ENCODE measurements at regions of chr13 and their contacts with region 1.

Region 1: GRCh38 chr13:31518645-31519044 is 220.7 kb upstream of the RXFP2 start:
- DNase-seq: no peak
- ATAC-seq: no peak

Region 2: DNA sequence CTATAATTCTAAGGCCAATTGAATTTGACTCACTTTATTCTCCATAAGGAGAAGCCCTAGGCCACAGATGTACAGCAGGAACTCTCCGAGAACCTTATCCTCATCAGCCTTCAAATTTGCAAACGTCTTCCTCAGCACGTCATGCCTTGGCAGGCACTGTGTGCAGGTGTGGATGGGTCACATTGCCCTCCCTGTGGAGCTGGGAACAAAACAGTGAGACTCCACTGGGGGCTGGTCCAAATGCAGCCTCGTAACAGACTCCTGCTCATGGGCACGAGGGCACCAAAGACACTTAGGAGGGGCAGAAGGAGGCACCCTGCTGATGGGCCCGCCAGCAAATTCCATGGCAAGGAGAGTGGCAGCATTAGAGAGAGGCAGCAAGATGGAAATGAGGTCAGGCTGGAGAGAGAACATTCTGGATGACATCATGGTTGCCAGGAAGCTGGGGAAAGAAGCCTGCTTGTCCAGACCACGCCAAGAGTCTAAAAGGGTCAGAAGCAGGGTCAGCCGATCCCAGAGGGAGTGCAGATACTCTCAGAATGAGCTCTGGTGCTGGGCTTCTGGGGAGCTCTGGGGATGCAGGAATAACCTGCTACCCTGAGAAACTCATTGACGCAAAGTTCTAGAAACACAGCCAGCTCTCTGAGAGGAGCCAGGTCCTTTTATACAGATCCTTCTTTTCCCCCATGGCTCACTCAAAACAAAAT is 76.7 kb before region 1 on chr13:
- intact Hi-C with region 1: loop called (anchors 5 kb)
- DNase-seq: peak; percentile 78
- ATAC-seq: peak; percentile 95